ENCODE measurements at regions of chr11 and their contacts with region 1.

Region 1: GRCh38 chr11:76799066-76799804 is 16.1 kb downstream of the TSKU start:
- DNase-seq: peak; percentile 75
- H3K4me3 Mint-ChIP-seq: no peak overlapping the region
- H3K27ac Mint-ChIP-seq: peak overlapping the region; percentile 25
- H3K4me1 Mint-ChIP-seq: peaks cover 22% of the 10 kb centered on the region
- H3K27me3 Mint-ChIP-seq: peaks cover 11% of the 10 kb centered on the region

Region 2: GRCh38 chr11:76734456-76735420 is 64.5 kb before region 1 on chr11:
- CTCF ChIA-PET with region 1: interaction called, 10 read pairs
- POLR2A ChIA-PET with region 1: interaction called, 3 read pairs
- DNase-seq: no peak
- H3K4me3 Mint-ChIP-seq: no peak overlapping the region
- H3K27ac Mint-ChIP-seq: no peak overlapping the region
- H3K4me1 Mint-ChIP-seq: peaks cover 6% of the 10 kb centered on the region
- H3K27me3 Mint-ChIP-seq: peaks cover 1% of the 10 kb centered on the region

Region 3: DNA sequence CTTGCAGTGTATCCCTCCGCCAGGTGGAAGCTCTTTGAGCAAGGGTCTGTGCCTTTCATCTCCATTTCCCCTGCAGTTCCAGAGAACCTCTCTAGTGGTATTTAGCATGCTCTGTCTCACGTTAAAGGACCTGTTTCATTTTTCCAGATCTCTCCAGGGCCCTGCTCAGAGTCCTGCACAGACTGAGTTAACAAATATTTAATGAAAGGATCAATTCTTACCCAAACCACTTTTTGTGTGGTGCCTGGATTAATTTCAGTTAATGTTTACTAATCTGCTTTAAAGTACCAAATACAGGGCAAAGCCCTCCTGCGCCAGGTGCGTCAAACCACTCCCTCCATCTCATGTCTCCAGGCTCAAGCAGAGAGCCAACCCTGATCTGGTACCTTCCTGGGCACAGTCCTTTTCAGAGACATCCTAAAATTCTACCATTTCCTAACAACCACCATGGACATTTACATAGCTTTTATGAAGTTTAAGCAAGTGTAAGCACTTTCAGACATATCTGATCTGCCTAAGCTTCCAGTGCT is 42.8 kb after region 1 on chr11:
- CTCF ChIA-PET with region 1: no interaction called
- POLR2A ChIA-PET with region 1: no interaction called
- DNase-seq: no peak
- H3K4me3 Mint-ChIP-seq: no peak overlapping the region
- H3K27ac Mint-ChIP-seq: no peak overlapping the region
- H3K4me1 Mint-ChIP-seq: no peaks in the 10 kb centered on the region
- H3K27me3 Mint-ChIP-seq: peaks cover 35% of the 10 kb centered on the region

Measured in activated CD4-positive, alpha-beta T cell treated with anti-CD3 and anti-CD28 coated beads, Interleukin-2, amount 10 ng/mL, durations not matched to agents 7 days and 5 days (primary cell).